PC-9 (cell line): ENCODE measurements at regions of chr1 and their contacts with region 1.

Region 1: GRCh38 chr1:67685067-67685557 is at the start of gene GADD45A:
- DNase-seq: peak; percentile 99
- H3K4me3 ChIP-seq: peak within 1 kb of the TSS; percentile 90
- H3K27ac ChIP-seq: peak within 1 kb of the TSS; percentile 99
- H3K4me1 ChIP-seq: peaks cover 57% of the 10 kb centered on the region
- H3K27me3 ChIP-seq: no peaks in the 10 kb centered on the region
- CTCF ChIP-seq: no peak
- total RNA-seq, gene GADD45A: 63.6 and 112 TPM in 2 replicates

Region 2: DNA sequence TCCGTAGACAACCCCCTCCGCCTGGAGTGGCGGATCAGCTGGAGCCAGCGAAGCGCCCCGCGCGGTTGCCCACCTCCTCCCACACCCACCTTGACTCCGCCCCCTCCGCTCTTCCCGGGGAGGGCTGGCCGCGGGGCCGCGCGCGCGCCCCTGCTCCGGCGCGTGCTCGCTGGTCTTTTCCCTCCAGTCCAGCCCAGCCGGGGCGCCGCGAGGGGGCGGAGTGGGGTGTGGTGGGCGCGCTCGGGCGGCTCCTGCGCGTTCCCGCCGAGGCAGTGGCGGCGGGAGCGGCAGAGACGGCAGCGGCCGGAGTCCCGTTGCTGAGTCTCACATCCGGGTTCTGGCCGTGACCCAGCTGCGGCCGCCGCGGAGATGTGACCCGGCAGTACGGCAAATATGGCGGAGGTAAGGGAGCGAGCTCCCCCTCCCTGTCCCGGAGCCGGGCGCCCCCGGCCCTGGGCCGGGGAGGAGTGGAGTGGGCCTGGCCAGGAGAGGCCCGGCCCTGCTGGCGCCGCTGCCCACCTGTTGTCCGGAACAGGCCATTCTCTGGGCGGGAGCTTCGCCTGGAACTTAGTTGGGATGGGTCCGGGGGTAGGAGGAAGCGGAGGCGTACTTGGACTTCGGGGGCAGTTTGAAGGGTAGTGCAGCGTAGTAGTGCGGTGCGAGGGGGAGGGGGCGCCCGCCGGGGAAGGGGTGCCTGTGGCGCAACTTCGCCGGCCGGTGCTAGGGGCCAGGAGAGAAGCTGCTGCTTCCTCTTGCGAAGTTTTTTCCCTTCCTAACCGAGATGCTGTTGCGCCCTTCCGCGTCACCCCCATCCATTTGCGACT is 754.9 kb before region 1 on chr1:
- CTCF ChIA-PET with region 1: no interaction called
- POLR2A ChIA-PET with region 1: no interaction called
- intact Hi-C with region 1: loop called (anchors 10 kb)
- DNase-seq: peak; percentile 72 to 97
- H3K4me3 ChIP-seq: peak overlapping the region; percentile 95
- H3K27ac ChIP-seq: peak overlapping the region; percentile 70
- H3K4me1 ChIP-seq: peaks cover 47% of the 10 kb centered on the region
- H3K27me3 ChIP-seq: no peaks in the 10 kb centered on the region
- CTCF ChIP-seq: no peak; the same call in 1 of the 2 replicates

Region 3: DNA sequence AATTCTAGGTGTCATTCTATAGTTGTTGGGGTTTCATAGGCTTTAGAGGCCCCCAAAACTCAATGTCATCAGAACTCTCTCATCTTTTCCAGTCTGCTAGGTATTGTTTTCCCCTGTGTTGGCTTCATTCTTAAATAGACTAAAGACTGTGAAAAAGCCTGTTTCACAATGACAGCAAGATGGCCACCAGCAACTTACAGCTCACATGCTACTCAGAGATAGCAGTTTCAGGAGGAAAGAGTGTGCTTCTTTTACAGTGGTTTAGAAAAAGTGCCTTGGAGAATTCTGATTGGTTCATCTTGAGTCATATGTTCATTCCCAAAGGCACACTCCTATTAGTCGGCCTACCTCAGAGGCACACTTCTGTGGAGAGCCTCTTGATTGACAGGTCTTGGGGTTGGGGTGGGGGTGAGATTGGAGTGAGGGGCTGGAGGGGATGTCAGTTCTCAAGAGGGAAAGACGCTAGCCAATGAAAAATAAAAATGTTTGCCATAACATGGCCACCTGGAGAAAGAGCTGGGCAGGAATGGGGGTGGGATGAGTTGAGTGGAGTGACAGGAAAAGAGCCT is 510.3 kb before region 1 on chr1:
- CTCF ChIA-PET with region 1: no interaction called
- POLR2A ChIA-PET with region 1: no interaction called
- intact Hi-C with region 1: no loop called
- DNase-seq: no peak
- H3K4me3 ChIP-seq: no peak overlapping the region
- H3K27ac ChIP-seq: no peak overlapping the region
- H3K4me1 ChIP-seq: no peaks in the 10 kb centered on the region; the same call in 1 of the 2 replicates
- H3K27me3 ChIP-seq: no peaks in the 10 kb centered on the region
- CTCF ChIP-seq: no peak

Region 4: GRCh38 chr1:67561704-67562113 is 123.4 kb before region 1 on chr1:
- CTCF ChIA-PET with region 1: interaction called, 8 read pairs
- POLR2A ChIA-PET with region 1: interaction called, 31 read pairs
- intact Hi-C with region 1: loop called (anchors 1 kb)
- DNase-seq: peak; percentile 97
- H3K4me3 ChIP-seq: peak overlapping the region; percentile 38; the same call in 1 of the 2 replicates
- H3K27ac ChIP-seq: peak overlapping the region; percentile 85
- H3K4me1 ChIP-seq: peaks cover 20% of the 10 kb centered on the region
- H3K27me3 ChIP-seq: no peaks in the 10 kb centered on the region
- CTCF ChIP-seq: peak; percentile 99

Region 5: GRCh38 chr1:67618285-67619018 is 66.7 kb before region 1 on chr1:
- CTCF ChIA-PET with region 1: no interaction called
- POLR2A ChIA-PET with region 1: interaction called, 10 read pairs
- intact Hi-C with region 1: no loop called
- DNase-seq: no peak
- H3K4me3 ChIP-seq: no peak overlapping the region
- H3K27ac ChIP-seq: no peak overlapping the region
- H3K4me1 ChIP-seq: peaks cover 15% of the 10 kb centered on the region
- H3K27me3 ChIP-seq: no peaks in the 10 kb centered on the region
- CTCF ChIP-seq: no peak

Region 6: DNA sequence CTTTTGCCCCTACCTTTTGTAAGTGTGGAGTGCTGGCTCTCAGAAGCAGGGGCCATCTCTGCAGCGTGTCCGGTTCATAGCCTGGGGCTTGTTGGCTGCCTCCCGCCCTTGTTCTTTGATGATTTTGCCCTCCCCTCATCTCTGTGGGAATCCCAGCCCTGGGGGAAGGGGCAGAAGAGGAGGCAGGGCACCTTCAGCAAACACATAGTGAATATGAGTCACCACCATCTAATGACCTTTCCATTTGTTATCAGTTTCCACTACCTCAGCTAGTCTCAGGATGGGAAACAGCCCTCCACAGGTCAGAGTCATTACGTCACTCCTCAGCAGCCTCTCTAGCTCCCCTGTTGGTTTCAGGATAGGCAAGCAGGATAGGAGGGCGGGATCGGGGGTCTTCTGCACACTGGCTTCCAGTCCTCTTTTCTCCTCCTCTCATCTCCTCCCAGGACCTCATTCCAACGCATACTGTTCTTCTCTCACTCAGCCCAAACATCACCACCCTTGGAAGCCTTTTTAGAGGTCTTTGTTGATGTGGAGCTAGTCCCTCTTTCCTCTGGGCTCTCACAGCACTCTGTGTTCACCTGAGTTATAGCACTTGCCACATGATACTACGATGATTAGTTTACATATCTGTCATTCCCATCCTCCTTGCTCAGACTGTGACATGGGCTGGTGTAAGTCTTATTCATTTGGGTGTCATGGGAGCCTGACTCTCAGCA is 15.7 kb after region 1 on chr1:
- CTCF ChIA-PET with region 1: interaction called, 10 read pairs
- POLR2A ChIA-PET with region 1: no interaction called
- intact Hi-C with region 1: loop called (anchors 1 kb)
- DNase-seq: peak; percentile 84 to 93
- H3K4me3 ChIP-seq: no peak overlapping the region
- H3K27ac ChIP-seq: peak overlapping the region; percentile 63
- H3K4me1 ChIP-seq: peaks cover 18% of the 10 kb centered on the region
- H3K27me3 ChIP-seq: no peaks in the 10 kb centered on the region
- CTCF ChIP-seq: peak; percentile 55; the same call in 1 of the 2 replicates

Region 7: GRCh38 chr1:67748630-67749029 is 63.5 kb after region 1 on chr1:
- CTCF ChIA-PET with region 1: no interaction called
- POLR2A ChIA-PET with region 1: interaction called, 23 read pairs
- intact Hi-C with region 1: loop called (anchors 1 kb)
- DNase-seq: peak in 1 of 2 experiments; percentile 57
- H3K4me3 ChIP-seq: peak overlapping the region; percentile 42; the same call in 1 of the 2 replicates
- H3K27ac ChIP-seq: peak overlapping the region; percentile 91
- H3K4me1 ChIP-seq: peaks cover 58% of the 10 kb centered on the region
- H3K27me3 ChIP-seq: no peaks in the 10 kb centered on the region
- CTCF ChIP-seq: no peak

Region 8: GRCh38 chr1:67766141-67766978 is 81.2 kb after region 1 on chr1:
- CTCF ChIA-PET with region 1: interaction called, 10 read pairs
- POLR2A ChIA-PET with region 1: no interaction called
- intact Hi-C with region 1: no loop called
- DNase-seq: peak in 1 of 2 experiments; percentile 44
- H3K4me3 ChIP-seq: no peak overlapping the region
- H3K27ac ChIP-seq: no peak overlapping the region
- H3K4me1 ChIP-seq: no peaks in the 10 kb centered on the region
- H3K27me3 ChIP-seq: no peaks in the 10 kb centered on the region
- CTCF ChIP-seq: peak; percentile 99

Region 9: GRCh38 chr1:67908250-67908936 is 223.3 kb after region 1 on chr1:
- CTCF ChIA-PET with region 1: no interaction called
- POLR2A ChIA-PET with region 1: no interaction called
- intact Hi-C with region 1: no loop called
- DNase-seq: no peak
- H3K4me3 ChIP-seq: no peak overlapping the region
- H3K27ac ChIP-seq: no peak overlapping the region
- H3K4me1 ChIP-seq: peaks cover 14% of the 10 kb centered on the region; the same call in 1 of the 2 replicates
- H3K27me3 ChIP-seq: no peaks in the 10 kb centered on the region
- CTCF ChIP-seq: no peak